Activated CD8-positive, alpha-beta T cell treated with anti-CD3 and anti-CD28 coated beads, Interleukin-2, amount 10 ng/mL, durations not matched to agents 7 days and 5 days (primary cell): ENCODE measurements at regions of chr14 and their contacts with region 1.

Region 1: GRCh38 chr14:75050852-75051554 is at the start of gene MLH3:
- DNase-seq: peak; percentile 81
- ATAC-seq: peak; percentile 89
- H3K4me3 Mint-ChIP-seq: peak within 1 kb of the TSS; percentile 83
- H3K27ac Mint-ChIP-seq: peak within 1 kb of the TSS; percentile 91
- H3K4me1 Mint-ChIP-seq: peaks cover 50% of the 10 kb centered on the region
- H3K27me3 Mint-ChIP-seq: no peaks in the 10 kb centered on the region
- total RNA-seq, gene MLH3: 15.1 to 17.2 TPM

Region 2: GRCh38 chr14:75063407-75064213 is 12.6 kb after region 1 on chr14 and contains the start of gene ACYP1:
- CTCF ChIA-PET with region 1: interaction called, 12 read pairs
- POLR2A ChIA-PET with region 1: interaction called, 5 read pairs
- DNase-seq: peak; percentile 94
- ATAC-seq: peak; percentile 100
- H3K4me3 Mint-ChIP-seq: peak within 1 kb of the TSS; percentile 100
- H3K27ac Mint-ChIP-seq: peak within 1 kb of the TSS; percentile 99
- H3K4me1 Mint-ChIP-seq: peaks cover 38% of the 10 kb centered on the region
- H3K27me3 Mint-ChIP-seq: no peaks in the 10 kb centered on the region
- total RNA-seq, gene ACYP1: 42.6 to 44.0 TPM

Region 3: GRCh38 chr14:75213172-75213571 is 162.2 kb after region 1 on chr14:
- CTCF ChIA-PET with region 1: no interaction called
- POLR2A ChIA-PET with region 1: no interaction called
- DNase-seq: no peak
- ATAC-seq: no peak
- H3K4me3 Mint-ChIP-seq: no peak overlapping the region
- H3K27ac Mint-ChIP-seq: no peak overlapping the region
- H3K4me1 Mint-ChIP-seq: peaks cover 32% of the 10 kb centered on the region
- H3K27me3 Mint-ChIP-seq: peaks cover 12% of the 10 kb centered on the region